ENCODE measurements at regions of chr10 and their contacts with region 1.

Region 1: DNA sequence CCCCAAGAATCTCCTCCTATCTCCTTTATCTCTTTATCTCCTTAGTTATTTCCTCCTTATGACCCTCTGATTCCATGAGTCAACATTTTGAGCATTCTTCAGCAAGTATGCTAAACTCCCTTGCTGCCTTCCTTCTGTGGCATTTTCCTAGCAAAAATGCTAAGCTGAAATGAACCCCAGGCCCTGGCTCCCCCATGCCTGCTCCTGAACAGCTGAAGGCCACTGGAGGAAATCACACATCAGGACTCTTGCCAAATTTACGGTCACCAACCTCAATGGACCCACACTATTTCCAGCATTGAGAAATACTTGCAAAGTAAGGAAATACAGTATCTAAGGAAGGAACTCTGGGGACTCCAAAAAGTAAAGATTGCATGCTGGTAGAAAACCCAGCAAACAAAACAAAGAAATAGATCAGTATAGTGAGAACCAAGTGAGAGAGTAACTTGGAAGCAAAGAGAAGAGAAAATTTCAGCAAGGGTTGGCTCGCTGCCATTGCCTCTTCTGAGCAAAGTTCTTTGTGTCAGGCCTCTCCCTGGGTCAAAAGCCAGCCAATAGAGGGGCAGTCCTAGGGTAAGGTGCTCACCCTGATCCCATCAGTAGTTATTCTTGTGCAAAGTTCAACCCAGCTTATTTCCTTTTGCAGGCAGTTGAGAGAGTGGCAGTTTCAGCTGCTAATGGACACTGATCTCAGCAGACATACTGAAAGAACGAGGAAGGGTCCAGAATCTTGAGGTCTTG is 5.1 kb upstream of the PLEKHS1 start:
- DNase-seq: no peak

Region 2: DNA sequence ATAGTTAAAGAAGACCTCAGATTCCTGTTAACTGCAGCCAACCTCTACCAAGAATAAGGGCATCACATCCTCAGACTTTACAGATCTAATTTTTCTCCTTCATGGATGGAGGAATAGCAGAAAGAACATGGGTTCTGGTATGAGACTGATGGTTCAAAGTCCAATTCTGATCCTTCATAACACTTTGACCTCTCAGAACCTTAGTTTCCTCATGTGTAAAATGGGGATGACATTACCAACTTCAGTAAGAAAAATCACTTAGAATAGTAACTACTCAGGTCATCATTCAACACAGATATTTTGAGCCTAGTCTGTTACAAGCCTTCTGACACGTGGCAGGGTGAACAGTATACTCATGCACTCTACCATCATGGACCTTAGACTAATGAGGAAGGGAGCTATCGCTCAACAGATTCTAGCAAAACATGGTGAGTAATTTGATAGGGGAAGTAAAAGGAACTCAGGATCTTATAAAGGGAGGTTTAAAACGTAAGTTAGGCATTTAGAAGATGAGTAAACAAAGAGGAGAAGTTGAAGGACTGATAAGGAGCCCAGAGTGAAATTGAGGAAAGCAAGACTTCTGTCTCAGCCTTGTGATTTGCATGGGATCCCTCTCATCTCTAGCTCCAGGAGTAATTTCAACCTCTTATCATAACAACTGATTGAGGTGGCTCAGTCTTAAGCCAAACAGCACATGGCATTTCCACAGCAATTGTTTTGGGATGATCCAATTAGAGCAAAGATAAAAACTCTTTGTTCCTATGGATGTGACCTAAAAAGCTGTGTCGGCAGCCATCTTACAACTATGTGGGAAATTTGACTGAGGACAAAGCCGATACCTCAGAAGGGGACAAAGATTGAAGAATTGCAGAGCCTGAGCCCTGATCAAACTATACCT is 865.5 kb before region 1 on chr10:
- intact Hi-C with region 1: loop called in 1 of 2 experiments (anchors 5 kb)
- DNase-seq: no peak

Region 3: GRCh38 chr10:113590616-113591015 is 155.8 kb before region 1 on chr10:
- intact Hi-C with region 1: loop called in 1 of 2 experiments (anchors 2 kb)
- DNase-seq: no peak

Region 4: GRCh38 chr10:113644185-113645120 is 101.9 kb before region 1 on chr10:
- intact Hi-C with region 1: no loop called
- DNase-seq: no peak

Measured in posterior vena cava (tissue), 2 donors.